WTC11 (cell line): ENCODE measurements at regions of chr17 and their contacts with region 1.

Region 1: GRCh38 chr17:6473128-6473767 is 29.0 kb downstream of the PIMREG start:
- DNase-seq: peak; percentile 89
- ATAC-seq: peak; percentile 79
- H3K4me3 Mint-ChIP-seq: no peak overlapping the region
- H3K27ac Mint-ChIP-seq: peak overlapping the region; percentile 71
- H3K4me1 Mint-ChIP-seq: peaks cover 19% of the 10 kb centered on the region
- H3K27me3 Mint-ChIP-seq: no peaks in the 10 kb centered on the region; the same call in 1 of the 2 replicates
- CTCF ChIP-seq: peak; percentile 94

Region 2: DNA sequence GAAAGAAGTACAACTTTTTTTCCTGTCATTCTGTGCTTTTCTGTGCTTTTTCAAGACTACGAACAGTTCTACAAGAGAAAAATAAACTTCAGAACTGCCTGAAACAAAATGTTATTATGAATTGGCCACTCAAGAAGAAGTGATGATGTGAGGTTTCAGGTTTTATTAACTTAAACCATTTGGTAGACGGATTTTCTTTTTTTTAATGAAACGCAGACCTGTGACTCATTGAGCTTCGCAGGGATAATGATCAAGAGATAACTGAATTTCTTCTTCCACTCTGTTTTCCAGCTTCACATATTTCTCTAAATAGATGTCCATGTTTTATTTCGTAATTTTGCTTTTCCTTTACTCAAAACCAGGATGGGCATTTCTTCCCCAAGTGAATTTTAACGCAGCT is 71.0 kb before region 1 on chr17:
- CTCF ChIA-PET with region 1: no interaction called
- POLR2A ChIA-PET with region 1: no interaction called
- DNase-seq: no peak
- ATAC-seq: no peak
- H3K4me3 Mint-ChIP-seq: no peak overlapping the region
- H3K27ac Mint-ChIP-seq: no peak overlapping the region
- H3K4me1 Mint-ChIP-seq: no peaks in the 10 kb centered on the region
- H3K27me3 Mint-ChIP-seq: no peaks in the 10 kb centered on the region; the same call in 1 of the 2 replicates
- CTCF ChIP-seq: no peak

Region 3: DNA sequence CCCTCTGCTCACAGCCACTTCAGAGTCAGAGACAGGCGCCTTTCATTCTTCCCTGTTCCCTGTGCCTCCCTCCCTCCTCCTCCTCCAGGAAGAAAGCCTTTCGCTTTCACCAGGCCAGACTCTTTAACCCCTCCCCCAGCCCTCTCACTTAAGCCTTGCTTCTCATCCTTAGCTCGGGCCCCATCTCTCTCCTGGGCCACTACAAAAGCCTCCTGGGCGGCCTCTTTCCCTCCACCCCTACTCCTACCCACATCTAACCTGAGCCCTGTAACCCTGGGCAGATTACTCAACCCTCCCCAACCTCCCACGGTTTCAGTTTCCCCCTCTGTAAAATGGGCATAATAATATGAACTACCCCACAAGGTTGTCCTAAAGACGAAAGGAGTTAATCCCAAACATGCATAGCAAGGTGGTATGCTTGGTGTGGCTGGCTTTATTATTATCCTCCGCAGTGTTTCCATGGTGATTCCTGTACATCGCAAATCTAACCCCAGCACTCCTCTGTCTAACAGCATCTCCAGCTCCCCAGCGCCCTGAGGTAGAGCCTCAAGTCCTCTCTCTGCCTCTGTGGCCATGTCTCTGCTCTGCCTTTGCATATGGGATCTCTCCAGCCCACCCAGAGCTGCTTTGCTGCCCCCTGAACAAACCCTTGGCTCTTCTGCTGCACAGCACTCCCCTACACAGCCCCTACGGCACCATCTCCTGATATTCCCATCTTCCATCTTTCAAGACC is 11.3 kb before region 1 on chr17:
- CTCF ChIA-PET with region 1: interaction called, 36 read pairs
- POLR2A ChIA-PET with region 1: no interaction called
- DNase-seq: peak; percentile 40
- ATAC-seq: peak; percentile 84
- H3K4me3 Mint-ChIP-seq: peak overlapping the region; percentile 18; the same call in 1 of the 2 replicates
- H3K27ac Mint-ChIP-seq: no peak overlapping the region
- H3K4me1 Mint-ChIP-seq: peaks cover 23% of the 10 kb centered on the region
- H3K27me3 Mint-ChIP-seq: no peaks in the 10 kb centered on the region
- CTCF ChIP-seq: no peak

Region 4: DNA sequence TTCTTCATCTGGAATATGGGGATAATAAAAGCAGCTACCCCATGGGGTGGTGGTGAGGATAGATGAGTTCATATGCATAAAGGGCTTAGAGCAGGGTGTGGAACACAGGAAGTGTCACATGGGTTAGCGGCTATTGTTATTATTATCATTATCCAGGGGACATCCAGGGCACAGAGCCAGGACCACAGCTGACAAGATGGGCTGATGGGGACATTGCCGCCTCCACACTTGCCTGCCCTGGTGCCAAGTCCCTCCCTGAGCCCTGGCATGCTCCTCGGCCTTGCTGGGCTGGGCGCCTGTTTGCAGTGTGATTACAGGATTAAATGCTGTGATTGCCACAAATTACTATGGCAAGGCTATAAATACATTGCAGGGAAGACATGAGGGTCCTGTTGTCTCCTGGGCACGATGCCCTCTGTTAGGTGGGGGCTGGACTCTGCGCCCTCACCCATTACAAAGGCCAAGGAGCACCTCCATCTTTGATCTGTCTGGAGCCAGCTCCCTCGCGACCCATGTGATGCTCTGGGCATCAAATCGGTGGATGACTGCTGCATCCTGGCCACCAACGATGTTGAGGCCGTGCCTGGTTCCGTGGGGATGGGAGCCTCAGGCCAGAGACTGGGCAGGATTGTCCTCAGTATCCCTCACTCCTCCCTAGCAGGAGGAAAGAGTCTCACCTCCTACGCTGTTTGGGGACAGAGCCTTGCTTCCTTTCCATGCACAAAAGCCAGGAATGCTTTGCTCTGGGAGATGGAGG is 14.2 kb after region 1 on chr17:
- CTCF ChIA-PET with region 1: interaction called, 16 read pairs
- POLR2A ChIA-PET with region 1: no interaction called
- DNase-seq: no peak
- ATAC-seq: no peak
- H3K4me3 Mint-ChIP-seq: no peak overlapping the region
- H3K27ac Mint-ChIP-seq: no peak overlapping the region
- H3K4me1 Mint-ChIP-seq: peaks cover 47% of the 10 kb centered on the region
- H3K27me3 Mint-ChIP-seq: no peaks in the 10 kb centered on the region; the same call in 1 of the 2 replicates
- CTCF ChIP-seq: no peak

Region 5: DNA sequence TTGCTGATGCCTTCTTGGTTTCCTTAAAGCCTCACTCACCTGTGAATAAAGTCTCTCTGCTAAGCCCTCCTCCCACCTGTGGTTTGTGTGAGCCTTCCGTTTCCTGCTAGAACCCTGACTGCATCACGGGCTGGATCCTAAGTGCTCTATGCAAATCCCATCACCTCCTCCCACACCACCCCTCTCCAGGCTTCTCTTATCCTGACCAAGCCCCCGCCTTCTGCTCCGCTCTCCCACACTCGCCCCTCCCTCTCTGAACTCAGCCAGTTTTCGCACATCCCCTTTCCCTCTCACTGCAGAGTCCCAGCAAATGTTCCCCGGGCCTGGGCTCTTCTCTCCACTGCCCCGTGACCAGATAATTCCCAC is 22.9 kb after region 1 on chr17:
- CTCF ChIA-PET with region 1: interaction called, 30 read pairs
- POLR2A ChIA-PET with region 1: no interaction called
- DNase-seq: peak; percentile 77
- ATAC-seq: peak; percentile 95
- H3K4me3 Mint-ChIP-seq: peak overlapping the region; percentile 62
- H3K27ac Mint-ChIP-seq: peak overlapping the region; percentile 74
- H3K4me1 Mint-ChIP-seq: peaks cover 49% of the 10 kb centered on the region
- H3K27me3 Mint-ChIP-seq: peaks cover 6% of the 10 kb centered on the region
- CTCF ChIP-seq: no peak

Region 6: GRCh38 chr17:6526362-6527152 is 53.3 kb after region 1 on chr17:
- CTCF ChIA-PET with region 1: interaction called, 15 read pairs
- POLR2A ChIA-PET with region 1: no interaction called
- DNase-seq: no peak
- ATAC-seq: no peak
- H3K4me3 Mint-ChIP-seq: no peak overlapping the region
- H3K27ac Mint-ChIP-seq: no peak overlapping the region
- H3K4me1 Mint-ChIP-seq: peaks cover 25% of the 10 kb centered on the region
- H3K27me3 Mint-ChIP-seq: no peaks in the 10 kb centered on the region; the same call in 1 of the 2 replicates
- CTCF ChIP-seq: no peak

Region 7: GRCh38 chr17:6548578-6549330 is 75.5 kb after region 1 on chr17:
- CTCF ChIA-PET with region 1: interaction called, 16 read pairs
- POLR2A ChIA-PET with region 1: interaction called, 6 read pairs
- DNase-seq: no peak
- ATAC-seq: no peak
- H3K4me3 Mint-ChIP-seq: no peak overlapping the region
- H3K27ac Mint-ChIP-seq: no peak overlapping the region; the same call in 1 of the 2 replicates
- H3K4me1 Mint-ChIP-seq: peaks cover 40% of the 10 kb centered on the region
- H3K27me3 Mint-ChIP-seq: peaks cover 13% of the 10 kb centered on the region
- CTCF ChIP-seq: no peak

Region 8: DNA sequence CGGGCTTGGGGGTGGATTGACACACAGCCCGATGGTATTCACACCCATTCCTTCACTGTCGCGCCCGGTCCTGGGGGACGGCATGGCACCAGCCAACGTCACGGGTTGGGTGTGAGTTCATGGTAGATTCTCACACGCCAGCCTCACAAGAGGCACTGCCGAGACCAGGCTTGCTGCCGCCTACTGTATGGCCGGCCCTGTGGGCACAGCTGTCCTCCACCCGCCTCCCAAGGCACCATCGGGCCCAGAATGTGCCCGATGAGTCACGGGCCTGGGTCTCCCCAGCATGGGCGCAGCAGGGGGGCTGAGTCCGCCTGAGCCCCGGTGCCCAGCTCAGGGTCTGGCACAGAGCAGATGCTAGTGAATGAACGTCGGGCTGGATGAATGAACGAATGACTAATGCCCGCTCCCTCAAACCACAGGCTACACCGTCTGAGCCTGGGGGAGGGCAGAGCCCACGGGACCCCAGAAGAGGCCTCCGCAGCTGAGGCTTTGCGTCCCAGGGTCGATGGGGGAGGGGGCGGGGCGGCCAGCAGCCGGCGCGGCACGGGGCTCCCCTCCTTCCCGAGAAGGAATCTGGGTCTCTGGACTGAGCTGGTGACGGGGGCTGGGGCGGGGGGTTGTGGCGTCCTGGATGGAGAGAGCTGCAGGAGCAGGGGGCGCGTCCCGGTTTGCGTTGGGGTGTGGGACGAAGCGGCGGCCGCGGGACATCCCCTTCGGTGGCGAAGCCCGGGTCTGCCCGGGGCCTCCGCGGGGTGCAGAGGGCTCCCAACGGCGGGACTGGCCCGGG is 82.3 kb after region 1 on chr17:
- CTCF ChIA-PET with region 1: interaction called, 16 read pairs
- POLR2A ChIA-PET with region 1: interaction called, 6 read pairs
- DNase-seq: peak; percentile 71
- ATAC-seq: peak; percentile 28
- H3K4me3 Mint-ChIP-seq: peak overlapping the region; percentile 73
- H3K27ac Mint-ChIP-seq: no peak overlapping the region
- H3K4me1 Mint-ChIP-seq: peaks cover 33% of the 10 kb centered on the region
- H3K27me3 Mint-ChIP-seq: peaks cover 59% of the 10 kb centered on the region
- CTCF ChIP-seq: no peak